Gastrocnemius medialis (tissue), 4 donors: ENCODE measurements at regions of chr19 and their contacts with region 1.

Region 1: GRCh38 chr19:15759962-15760565 is 22.3 kb downstream of the OR10H3 start:
- DNase-seq: no peak
- ATAC-seq: no peak
- H3K4me3 ChIP-seq: no peak overlapping the region
- H3K27ac ChIP-seq: no peak overlapping the region
- H3K4me1 ChIP-seq: no peaks in the 10 kb centered on the region
- H3K27me3 ChIP-seq: no peaks in the 10 kb centered on the region
- CTCF ChIP-seq: no peak
- POLR2A ChIP-seq: no peak

Region 2: GRCh38 chr19:15337202-15337601 is 422.9 kb before region 1 on chr19:
- in situ Hi-C with region 1: no loop called
- intact Hi-C with region 1: no loop called
- DNase-seq: peak; percentile 23 to 43
- ATAC-seq: peak; percentile 55 to 71
- H3K4me3 ChIP-seq: no peak overlapping the region
- H3K27ac ChIP-seq: peak overlapping the region; percentile 70 to 83 (median 78)
- H3K4me1 ChIP-seq: peaks cover 33 to 35% of the 10 kb centered on the region in 2 donors
- H3K27me3 ChIP-seq: no peaks in the 10 kb centered on the region
- CTCF ChIP-seq: no peak
- POLR2A ChIP-seq: peak in 1 of 2 donors; percentile 20

Region 3: GRCh38 chr19:15732388-15732787 is 27.7 kb before region 1 on chr19:
- in situ Hi-C with region 1: no loop called
- intact Hi-C with region 1: loop called (anchors 1 kb)
- DNase-seq: no peak
- ATAC-seq: no peak
- H3K4me3 ChIP-seq: no peak overlapping the region
- H3K27ac ChIP-seq: no peak overlapping the region
- H3K4me1 ChIP-seq: no peaks in the 10 kb centered on the region
- H3K27me3 ChIP-seq: no peaks in the 10 kb centered on the region
- CTCF ChIP-seq: no peak
- POLR2A ChIP-seq: no peak